ENCODE measurements at regions of chr17 and their contacts with region 1.

Region 1: DNA sequence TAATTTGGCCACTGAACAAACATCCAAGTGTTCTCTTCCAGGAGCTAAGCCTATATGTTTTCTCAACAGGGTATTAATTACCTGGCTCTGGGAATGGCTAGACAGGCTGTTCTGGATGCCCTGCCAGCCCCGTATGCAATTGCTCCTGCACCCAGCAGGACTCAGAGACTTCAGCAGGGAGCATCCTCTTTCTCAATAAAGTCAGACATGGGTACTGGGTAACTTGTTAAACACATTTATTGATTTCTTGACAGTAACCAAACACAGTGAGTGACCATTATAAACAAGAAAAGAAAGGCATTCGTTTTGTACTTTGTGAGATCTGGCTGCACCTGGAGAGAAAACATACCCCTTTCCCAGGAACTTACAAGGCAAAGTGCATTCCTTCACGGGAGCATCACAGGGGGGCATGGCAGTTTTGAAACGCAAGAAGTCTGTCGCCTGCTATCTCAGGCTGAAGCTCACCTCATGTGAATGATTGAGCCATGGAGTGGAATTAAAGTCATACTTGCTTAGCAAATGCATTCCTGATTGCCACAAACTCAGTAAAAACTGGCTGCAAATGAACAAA is 369.8 kb downstream of the UTP18 start:
- DNase-seq: peak; percentile 65 to 72
- ATAC-seq: peak; percentile 94 to 97
- H3K4me3 ChIP-seq: no peak overlapping the region
- H3K27ac ChIP-seq: peak overlapping the region; percentile 73 to 89 (median 79)
- H3K4me1 ChIP-seq: peaks cover 33 to 34% of the 10 kb centered on the region in 2 donors
- H3K27me3 ChIP-seq: no peaks in the 10 kb centered on the region
- CTCF ChIP-seq: peak in 4 of 5 experiments; percentile 10 to 46 (median 24)
- POLR2A ChIP-seq: no peak

Region 2: GRCh38 chr17:51650772-51651171 is 20.6 kb after region 1 on chr17:
- in situ Hi-C with region 1: no loop called
- intact Hi-C with region 1: loop called (anchors 1 kb)
- DNase-seq: no peak
- ATAC-seq: no peak
- H3K4me3 ChIP-seq: no peak overlapping the region
- H3K27ac ChIP-seq: peak overlapping the region in 3 of 4 donors; percentile 36 to 57 (median 43)
- H3K4me1 ChIP-seq: peaks cover 0 to 8% of the 10 kb centered on the region in 2 donors
- H3K27me3 ChIP-seq: no peaks in the 10 kb centered on the region
- CTCF ChIP-seq: no peak
- POLR2A ChIP-seq: no peak